ENCODE measurements at regions of chr16 and their contacts with region 1.

Region 1: DNA sequence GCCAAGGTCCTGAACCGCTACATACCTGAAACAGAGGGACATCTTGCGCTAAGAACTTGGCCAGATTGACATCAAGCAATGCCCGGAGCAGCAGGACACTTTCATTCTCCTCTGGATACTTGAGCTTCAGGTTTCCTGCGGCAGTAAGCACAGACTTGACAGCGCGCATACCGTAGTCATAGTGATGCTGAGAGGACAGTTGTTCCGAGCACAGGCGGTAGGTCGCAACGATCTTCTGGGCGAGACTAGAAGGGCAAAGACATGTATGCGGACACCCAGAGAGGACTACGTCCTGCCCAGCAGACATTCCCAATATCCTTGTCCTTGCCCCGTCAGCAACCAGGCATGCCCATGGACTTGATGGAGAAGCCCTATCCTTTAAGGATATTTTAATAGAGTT is 112.9 kb downstream of the DNAH3 start:
- DNase-seq: no peak
- H3K4me3 ChIP-seq: no peak overlapping the region
- H3K27ac ChIP-seq: no peak overlapping the region
- H3K4me1 ChIP-seq: no peaks in the 10 kb centered on the region
- H3K27me3 ChIP-seq: no peaks in the 10 kb centered on the region
- CTCF ChIP-seq: no peak
- EP300 ChIP-seq: no peak
- POLR2A ChIP-seq: no peak

Region 2: DNA sequence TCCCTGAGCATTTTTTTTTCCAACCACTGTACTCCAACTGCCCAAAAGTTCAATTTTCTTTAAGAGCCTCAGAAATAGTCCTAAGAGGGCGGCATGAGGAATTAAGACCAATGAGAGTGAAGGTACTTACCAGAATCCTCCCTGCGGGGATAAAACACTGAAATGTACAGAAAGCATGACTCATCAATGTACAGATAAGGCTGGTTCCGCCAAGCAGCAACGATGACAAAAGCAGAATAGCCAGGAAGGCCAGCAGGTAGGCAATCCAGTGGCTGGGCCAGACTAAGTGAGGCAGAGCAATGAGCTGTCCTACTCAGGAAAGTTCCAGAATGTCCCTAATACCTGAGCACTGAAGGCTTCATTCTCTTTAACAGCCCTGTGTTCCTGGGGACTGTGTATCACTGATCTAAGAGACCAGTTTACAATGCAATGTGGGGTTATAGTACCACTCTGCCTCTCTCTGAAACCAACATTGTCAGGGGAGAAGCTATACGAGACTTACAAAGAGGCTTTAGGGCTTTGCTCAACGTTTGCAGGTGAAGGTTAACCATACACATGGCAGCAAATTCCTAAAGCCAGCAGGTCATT is 953.0 kb before region 1 on chr16:
- in situ Hi-C with region 1: no loop called
- intact Hi-C with region 1: no loop called
- DNase-seq: no peak
- H3K4me3 ChIP-seq: no peak overlapping the region
- H3K27ac ChIP-seq: no peak overlapping the region
- H3K4me1 ChIP-seq: no peaks in the 10 kb centered on the region
- H3K27me3 ChIP-seq: no peaks in the 10 kb centered on the region
- CTCF ChIP-seq: no peak
- EP300 ChIP-seq: no peak
- POLR2A ChIP-seq: no peak

Region 3: DNA sequence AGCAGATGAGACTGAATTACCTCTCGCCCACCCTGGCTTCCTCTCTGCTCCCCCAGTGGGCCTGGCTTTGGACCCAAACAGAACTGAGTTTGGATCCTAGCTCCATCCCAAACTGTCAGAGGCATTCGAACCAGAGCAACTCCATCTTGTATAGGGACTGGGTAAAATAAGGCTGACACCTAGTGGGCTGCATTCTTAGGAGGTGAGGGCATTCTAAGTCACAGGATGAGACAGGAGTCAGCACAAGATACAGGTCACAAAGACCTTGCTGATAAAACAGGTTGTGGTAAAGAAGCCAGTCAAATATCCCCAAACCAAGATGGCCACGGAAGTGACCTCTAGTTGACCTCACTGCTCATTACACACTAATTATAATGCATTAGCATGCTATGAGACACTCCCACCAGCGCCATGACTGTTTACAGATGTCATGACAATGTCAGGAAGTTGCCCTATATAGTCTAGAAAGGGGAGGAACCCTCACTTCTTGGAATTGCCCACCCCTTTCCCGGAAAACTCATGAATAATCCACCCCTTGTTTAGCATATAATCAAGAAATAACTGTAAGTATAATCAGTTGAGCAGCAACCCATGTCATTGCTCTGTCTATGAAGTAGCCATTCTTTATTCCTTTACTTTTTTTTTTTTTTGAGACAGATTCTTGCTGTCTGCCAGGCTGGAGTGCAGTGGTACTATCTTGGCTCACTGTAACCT is 92.7 kb before region 1 on chr16:
- in situ Hi-C with region 1: no loop called
- intact Hi-C with region 1: no loop called
- DNase-seq: no peak
- H3K4me3 ChIP-seq: no peak overlapping the region
- H3K27ac ChIP-seq: no peak overlapping the region
- H3K4me1 ChIP-seq: no peaks in the 10 kb centered on the region
- H3K27me3 ChIP-seq: no peaks in the 10 kb centered on the region
- CTCF ChIP-seq: no peak
- EP300 ChIP-seq: no peak
- POLR2A ChIP-seq: no peak

Region 4: GRCh38 chr16:22333457-22333994 is 1295.8 kb after region 1 on chr16:
- in situ Hi-C with region 1: no loop called
- intact Hi-C with region 1: loop called (anchors 5 kb)
- DNase-seq: no peak
- H3K4me3 ChIP-seq: no peak overlapping the region
- H3K27ac ChIP-seq: no peak overlapping the region
- H3K4me1 ChIP-seq: peaks cover 0 to 9% (median 5%) of the 10 kb centered on the region in 4 donors
- H3K27me3 ChIP-seq: no peaks in the 10 kb centered on the region
- CTCF ChIP-seq: no peak
- EP300 ChIP-seq: no peak
- POLR2A ChIP-seq: no peak